Left ventricle myocardium inferior (tissue), 1 donor: ENCODE measurements at regions of chr18 and their contacts with region 1.

Region 1: DNA sequence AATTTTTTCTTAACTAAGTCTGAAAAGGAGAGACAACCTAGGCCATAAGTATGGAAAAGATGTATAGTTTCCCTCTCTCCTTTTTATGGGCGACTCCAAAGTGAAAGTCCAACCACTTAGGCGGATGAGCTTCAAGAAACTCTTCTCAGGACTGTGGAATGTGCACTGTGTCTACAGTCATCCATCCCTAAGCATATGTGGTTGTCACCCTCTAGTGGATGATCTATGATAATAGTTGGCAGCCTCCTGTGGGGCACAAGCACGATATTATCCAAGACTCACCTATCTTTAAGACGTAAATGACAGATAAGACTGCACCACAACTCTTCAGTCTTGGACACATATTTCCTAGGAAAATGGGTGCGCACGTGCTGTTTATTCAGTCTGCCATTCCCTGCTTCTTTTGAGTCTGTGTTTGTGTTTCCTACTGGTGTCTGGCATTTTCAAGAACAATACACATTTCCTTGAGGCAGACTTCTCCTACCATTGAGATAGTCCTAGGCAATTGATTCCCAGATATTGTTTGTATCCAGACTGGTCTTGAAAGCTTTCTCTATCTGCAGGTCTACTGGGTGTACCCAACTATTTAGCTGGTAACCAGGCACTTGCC is 145.5 kb upstream of the CTAGE1 start:
- DNase-seq: no peak
- H3K4me3 ChIP-seq: peak overlapping the region; percentile 69
- H3K27ac ChIP-seq: peak overlapping the region; percentile 98
- H3K4me1 ChIP-seq: peaks cover 24% of the 10 kb centered on the region
- H3K27me3 ChIP-seq: no peaks in the 10 kb centered on the region
- CTCF ChIP-seq: peak; percentile 86

Region 2: DNA sequence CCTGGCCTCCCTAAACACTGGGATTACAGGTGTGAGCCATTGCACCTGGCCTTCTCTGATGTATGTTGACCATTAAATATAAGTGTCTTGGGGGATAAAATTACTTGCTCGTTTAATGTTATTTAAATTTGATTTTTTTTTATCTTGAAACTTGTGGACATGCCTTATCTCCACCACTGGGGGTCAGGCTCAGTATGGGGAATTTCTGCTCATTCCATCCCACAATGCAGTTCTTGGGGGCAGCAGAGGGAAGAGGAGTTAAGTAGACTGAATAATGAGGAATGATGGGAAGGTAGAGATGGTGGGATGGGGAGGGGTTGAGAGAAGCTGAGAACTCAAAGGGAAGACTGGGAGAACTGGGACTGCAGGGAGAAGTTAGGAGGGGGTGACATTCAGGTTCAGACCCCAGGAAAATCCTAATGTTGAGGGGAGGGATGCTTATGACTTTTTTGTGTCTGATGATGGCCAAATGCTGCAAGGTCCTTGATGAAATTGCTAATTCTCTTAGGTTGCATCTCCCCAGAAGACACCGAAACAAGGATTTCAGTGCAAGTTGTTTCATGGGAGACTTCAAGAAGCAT is 648.4 kb before region 1 on chr18:
- intact Hi-C with region 1: loop called (anchors 10 kb)
- DNase-seq: no peak
- H3K4me3 ChIP-seq: no peak overlapping the region
- H3K27ac ChIP-seq: no peak overlapping the region
- H3K4me1 ChIP-seq: no peaks in the 10 kb centered on the region
- H3K27me3 ChIP-seq: no peaks in the 10 kb centered on the region
- CTCF ChIP-seq: peak; percentile 57

Region 3: DNA sequence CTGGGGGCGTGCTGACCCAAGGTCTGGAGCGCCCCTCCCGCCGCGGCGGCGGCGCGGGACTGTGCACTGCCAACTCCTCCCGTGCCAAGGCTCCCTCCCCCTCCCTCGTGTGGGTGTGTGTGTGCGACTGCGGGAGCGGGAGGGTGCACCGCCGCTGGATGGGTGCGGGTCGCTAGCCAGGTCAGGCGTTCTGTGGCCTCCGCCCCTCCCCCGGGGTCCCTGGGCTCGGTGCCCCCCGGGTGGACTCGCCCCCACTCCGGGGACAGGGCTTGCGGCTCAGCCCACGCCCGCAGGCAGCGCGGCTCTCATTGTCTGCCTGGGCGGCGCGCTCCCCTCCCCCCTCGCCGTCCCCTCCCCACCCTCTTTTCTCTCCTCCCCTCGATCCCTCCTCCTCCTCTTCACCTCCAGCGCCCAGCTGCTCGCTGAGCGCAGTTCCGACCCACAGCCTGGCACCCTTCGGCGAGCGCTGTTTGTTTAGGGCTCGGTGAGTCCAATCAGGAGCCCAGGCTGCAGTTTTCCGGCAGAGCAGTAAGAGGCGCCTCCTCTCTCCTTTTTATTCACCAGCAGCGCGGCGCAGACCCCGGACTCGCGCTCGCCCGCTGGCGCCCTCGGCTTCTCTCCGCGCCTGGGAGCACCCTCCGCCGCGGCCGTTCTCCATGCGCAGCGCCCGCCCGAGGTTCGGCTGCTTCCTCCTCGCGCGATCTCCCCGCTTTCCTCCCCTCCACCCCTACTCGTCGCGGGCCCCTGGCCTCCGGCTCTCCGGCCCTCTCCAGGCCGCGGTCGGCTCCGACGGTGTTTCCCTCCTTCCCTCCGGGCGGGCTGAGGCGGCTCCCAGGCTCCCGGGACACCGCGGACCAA is 394.0 kb before region 1 on chr18 and contains the start of gene GATA6:
- intact Hi-C with region 1: loop called (anchors 5 kb)
- DNase-seq: peak; percentile 92
- H3K4me3 ChIP-seq: peak within 1 kb of the TSS; percentile 99
- H3K27ac ChIP-seq: peak within 1 kb of the TSS; percentile 100
- H3K4me1 ChIP-seq: peaks cover 88% of the 10 kb centered on the region
- H3K27me3 ChIP-seq: peaks cover 42% of the 10 kb centered on the region
- CTCF ChIP-seq: peak; percentile 38
- total RNA-seq, gene GATA6: 60.9 TPM

Region 4: DNA sequence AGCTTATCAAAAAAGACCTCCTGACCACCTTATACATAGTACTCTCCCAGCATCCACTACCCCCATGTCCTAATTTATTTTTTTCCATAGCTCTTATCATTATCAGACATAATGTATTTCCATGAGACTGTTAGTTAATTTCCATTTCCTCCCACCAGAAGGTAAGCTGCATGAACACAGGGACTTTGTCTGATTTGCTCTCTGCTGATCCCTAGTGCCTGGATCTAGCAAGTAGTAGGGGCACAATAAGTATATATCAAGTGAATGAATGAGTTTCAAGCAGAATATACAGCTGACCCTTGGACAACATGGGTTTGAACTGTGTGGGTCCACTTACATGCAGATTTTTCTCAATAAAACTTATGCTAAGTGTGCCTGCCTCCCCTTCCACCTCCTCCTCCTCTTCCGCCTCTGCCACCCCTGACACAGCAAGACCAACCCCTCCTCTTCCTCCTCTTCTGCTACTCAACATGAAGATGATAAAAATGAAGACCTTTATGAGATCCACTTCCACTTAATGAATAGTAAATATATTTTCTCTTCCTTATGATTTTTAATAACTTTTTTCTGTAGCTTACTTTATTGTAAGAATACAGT is 199.2 kb before region 1 on chr18:
- intact Hi-C with region 1: loop called (anchors 10 kb)
- DNase-seq: no peak
- H3K4me3 ChIP-seq: no peak overlapping the region
- H3K27ac ChIP-seq: no peak overlapping the region
- H3K4me1 ChIP-seq: peaks cover 6% of the 10 kb centered on the region
- H3K27me3 ChIP-seq: no peaks in the 10 kb centered on the region
- CTCF ChIP-seq: peak; percentile 62

Region 5: GRCh38 chr18:22465859-22466457 is 97.2 kb before region 1 on chr18:
- intact Hi-C with region 1: loop called (anchors 10 kb)
- DNase-seq: peak; percentile 26
- H3K4me3 ChIP-seq: peak overlapping the region; percentile 33
- H3K27ac ChIP-seq: peak overlapping the region; percentile 96
- H3K4me1 ChIP-seq: peaks cover 51% of the 10 kb centered on the region
- H3K27me3 ChIP-seq: no peaks in the 10 kb centered on the region
- CTCF ChIP-seq: no peak

Region 6: DNA sequence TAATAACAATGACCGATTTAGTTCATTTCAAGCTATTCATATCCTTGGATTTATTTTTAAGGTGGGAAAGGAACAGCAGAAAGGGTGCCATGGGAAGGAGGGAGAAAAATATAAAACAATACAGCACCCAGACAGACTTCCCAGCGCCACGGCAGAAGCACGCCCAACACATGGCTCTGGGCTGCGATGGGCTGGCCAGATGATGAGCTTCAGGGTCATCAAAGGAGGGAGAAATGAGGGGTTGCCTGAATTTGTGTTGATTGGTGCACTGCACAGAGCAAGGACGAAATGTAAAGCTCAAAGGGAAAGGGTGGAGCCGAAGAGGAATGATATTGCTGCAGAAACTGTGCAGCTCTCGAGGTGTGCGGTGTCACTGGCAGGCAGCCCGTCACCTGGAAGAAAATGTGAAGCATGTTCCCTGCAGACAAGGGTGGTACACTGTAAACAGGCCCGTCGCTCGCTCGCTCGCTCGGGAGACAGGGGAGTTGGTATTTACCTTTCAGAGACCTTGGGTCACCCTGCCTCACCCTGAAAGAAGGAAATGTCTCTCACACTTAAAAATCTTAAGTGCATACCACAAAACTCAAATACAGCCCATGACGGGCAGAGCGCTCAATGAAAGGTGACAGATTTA is 50.0 kb after region 1 on chr18:
- intact Hi-C with region 1: no loop called
- DNase-seq: no peak
- H3K4me3 ChIP-seq: no peak overlapping the region
- H3K27ac ChIP-seq: no peak overlapping the region
- H3K4me1 ChIP-seq: peaks cover 23% of the 10 kb centered on the region
- H3K27me3 ChIP-seq: no peaks in the 10 kb centered on the region
- CTCF ChIP-seq: no peak